Activated CD8-positive, alpha-beta T cell treated with anti-CD3 and anti-CD28 coated beads for 36 hours (primary cell): ENCODE measurements at regions of chr16 and their contacts with region 1.

Region 1: DNA sequence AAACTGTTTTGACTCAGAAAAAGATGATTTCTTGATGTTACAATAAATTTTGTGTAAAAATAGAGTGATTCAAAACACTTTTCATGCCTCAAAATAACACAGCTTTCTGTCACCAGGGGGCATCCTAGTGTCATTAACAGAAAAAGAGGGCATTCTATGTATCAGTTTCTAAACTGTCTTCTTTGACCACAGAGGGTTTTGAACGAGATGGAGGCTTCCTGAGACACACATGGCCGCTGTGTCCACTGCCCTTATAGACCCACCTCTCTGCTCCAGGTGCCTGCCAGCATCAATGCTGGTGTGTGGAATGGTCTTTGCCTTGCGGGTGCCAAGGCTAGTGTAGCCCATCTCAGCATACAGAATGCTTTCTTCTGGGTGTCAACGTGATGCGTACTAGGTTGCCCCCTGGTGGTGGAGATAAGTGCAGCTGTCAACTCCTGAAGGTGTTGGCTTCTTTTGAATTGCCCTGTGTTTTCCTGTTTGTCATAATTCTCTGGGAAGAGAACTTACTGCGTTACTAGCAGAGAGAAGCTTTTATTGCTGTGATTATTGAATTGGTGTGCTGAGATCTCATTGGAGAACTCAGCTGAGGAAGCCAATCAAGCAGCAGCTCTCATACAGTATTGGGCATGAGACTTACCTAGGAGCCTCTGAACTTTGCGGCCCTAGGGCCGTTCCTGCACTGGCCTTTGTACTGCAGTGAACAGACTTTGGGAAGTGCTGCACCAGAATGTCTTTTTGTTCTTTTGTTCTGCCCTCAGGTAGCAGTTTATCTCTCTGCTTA is 38.6 kb downstream of the USP10 start:
- DNase-seq: peak; percentile 89
- ATAC-seq: peak; percentile 85
- H3K4me3 Mint-ChIP-seq: no peak overlapping the region
- H3K27ac Mint-ChIP-seq: peak overlapping the region; percentile 13
- H3K4me1 Mint-ChIP-seq: peaks cover 60% of the 10 kb centered on the region
- H3K27me3 Mint-ChIP-seq: no peaks in the 10 kb centered on the region
- CTCF ChIP-seq: peak; percentile 94

Region 2: DNA sequence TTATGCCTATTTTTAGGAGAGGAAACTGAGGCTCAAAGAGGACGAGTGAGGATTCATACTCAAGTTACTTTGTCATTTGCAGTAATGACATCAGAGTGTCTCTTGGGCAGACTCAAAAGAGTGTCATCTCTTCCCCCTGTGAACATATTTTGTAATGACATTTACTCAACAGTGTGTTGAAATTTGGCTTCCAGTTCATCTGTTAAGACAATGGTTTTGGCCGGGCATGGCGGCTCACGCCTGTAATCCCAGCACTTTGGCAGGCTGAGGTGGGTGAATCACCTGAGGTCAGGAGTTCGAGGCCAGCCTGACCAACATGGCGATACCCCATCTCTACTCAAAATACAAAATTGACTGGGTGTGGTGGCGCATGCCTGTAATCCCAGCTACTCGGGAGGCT is 414.8 kb before region 1 on chr16:
- CTCF ChIA-PET with region 1: no interaction called
- POLR2A ChIA-PET with region 1: no interaction called
- intact Hi-C with region 1: no loop called
- DNase-seq: peak; percentile 6
- ATAC-seq: no peak
- H3K4me3 Mint-ChIP-seq: no peak overlapping the region
- H3K27ac Mint-ChIP-seq: no peak overlapping the region
- H3K4me1 Mint-ChIP-seq: no peaks in the 10 kb centered on the region
- H3K27me3 Mint-ChIP-seq: peaks cover 2% of the 10 kb centered on the region
- CTCF ChIP-seq: no peak

Region 3: DNA sequence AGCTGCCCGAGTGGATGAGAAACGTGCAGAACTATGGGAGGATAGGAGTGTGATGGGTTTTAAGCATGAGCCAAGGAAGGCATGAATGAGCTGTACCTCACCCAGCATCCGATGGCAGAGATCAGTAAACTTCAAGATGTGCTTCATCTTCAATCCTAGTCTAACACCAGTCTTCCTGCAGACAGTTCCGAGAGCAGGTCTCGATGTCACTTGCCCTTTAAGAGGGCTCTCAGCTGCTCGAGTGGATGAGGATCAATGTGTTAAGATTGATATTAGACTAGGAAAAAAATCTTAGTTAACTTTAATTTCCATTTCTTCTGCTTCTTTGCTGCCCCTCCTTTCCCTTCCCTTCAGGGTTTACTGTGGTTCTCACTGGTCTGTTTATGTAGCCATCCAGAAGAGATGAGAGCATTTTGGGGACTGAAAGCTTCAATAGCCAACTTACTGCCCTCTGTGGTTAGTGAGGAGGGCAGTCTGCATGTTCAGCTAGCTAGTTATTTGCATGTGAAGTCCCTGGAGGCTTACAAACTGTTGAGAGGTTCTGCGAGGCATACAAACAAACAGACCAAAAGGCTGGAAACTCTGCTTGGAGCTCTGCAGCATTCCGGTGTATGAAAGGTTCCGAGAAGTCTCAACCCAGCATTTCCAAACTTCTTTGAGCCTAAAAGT is 74.9 kb before region 1 on chr16:
- CTCF ChIA-PET with region 1: interaction called, 25 read pairs
- POLR2A ChIA-PET with region 1: no interaction called
- intact Hi-C with region 1: no loop called
- DNase-seq: no peak
- ATAC-seq: no peak
- H3K4me3 Mint-ChIP-seq: no peak overlapping the region
- H3K27ac Mint-ChIP-seq: no peak overlapping the region
- H3K4me1 Mint-ChIP-seq: peaks cover 8% of the 10 kb centered on the region
- H3K27me3 Mint-ChIP-seq: no peaks in the 10 kb centered on the region
- CTCF ChIP-seq: no peak

Region 4: GRCh38 chr16:84687715-84688114 is 50.7 kb before region 1 on chr16:
- CTCF ChIA-PET with region 1: interaction called, 12 read pairs
- POLR2A ChIA-PET with region 1: no interaction called
- intact Hi-C with region 1: no loop called
- DNase-seq: peak; percentile 20
- ATAC-seq: peak; percentile 69
- H3K4me3 Mint-ChIP-seq: no peak overlapping the region
- H3K27ac Mint-ChIP-seq: no peak overlapping the region
- H3K4me1 Mint-ChIP-seq: peaks cover 9% of the 10 kb centered on the region
- H3K27me3 Mint-ChIP-seq: peaks cover 10% of the 10 kb centered on the region
- CTCF ChIP-seq: no peak

Region 5: GRCh38 chr16:84714028-84714427 is 24.4 kb before region 1 on chr16:
- CTCF ChIA-PET with region 1: interaction called, 27 read pairs
- POLR2A ChIA-PET with region 1: interaction called, 3 read pairs
- intact Hi-C with region 1: no loop called
- DNase-seq: no peak
- ATAC-seq: no peak
- H3K4me3 Mint-ChIP-seq: no peak overlapping the region
- H3K27ac Mint-ChIP-seq: no peak overlapping the region
- H3K4me1 Mint-ChIP-seq: peaks cover 69% of the 10 kb centered on the region
- H3K27me3 Mint-ChIP-seq: no peaks in the 10 kb centered on the region
- CTCF ChIP-seq: no peak

Region 6: GRCh38 chr16:84754353-84754856 is 16.0 kb after region 1 on chr16:
- CTCF ChIA-PET with region 1: interaction called, 151 read pairs
- POLR2A ChIA-PET with region 1: no interaction called
- intact Hi-C with region 1: no loop called
- DNase-seq: peak; percentile 78
- ATAC-seq: peak; percentile 84
- H3K4me3 Mint-ChIP-seq: no peak overlapping the region
- H3K27ac Mint-ChIP-seq: peak overlapping the region; percentile 13
- H3K4me1 Mint-ChIP-seq: peaks cover 83% of the 10 kb centered on the region
- H3K27me3 Mint-ChIP-seq: no peaks in the 10 kb centered on the region
- CTCF ChIP-seq: peak; percentile 89